Cardiac septum (tissue), 1 donor: ENCODE measurements at regions of chr4 and their contacts with region 1.

Region 1: DNA sequence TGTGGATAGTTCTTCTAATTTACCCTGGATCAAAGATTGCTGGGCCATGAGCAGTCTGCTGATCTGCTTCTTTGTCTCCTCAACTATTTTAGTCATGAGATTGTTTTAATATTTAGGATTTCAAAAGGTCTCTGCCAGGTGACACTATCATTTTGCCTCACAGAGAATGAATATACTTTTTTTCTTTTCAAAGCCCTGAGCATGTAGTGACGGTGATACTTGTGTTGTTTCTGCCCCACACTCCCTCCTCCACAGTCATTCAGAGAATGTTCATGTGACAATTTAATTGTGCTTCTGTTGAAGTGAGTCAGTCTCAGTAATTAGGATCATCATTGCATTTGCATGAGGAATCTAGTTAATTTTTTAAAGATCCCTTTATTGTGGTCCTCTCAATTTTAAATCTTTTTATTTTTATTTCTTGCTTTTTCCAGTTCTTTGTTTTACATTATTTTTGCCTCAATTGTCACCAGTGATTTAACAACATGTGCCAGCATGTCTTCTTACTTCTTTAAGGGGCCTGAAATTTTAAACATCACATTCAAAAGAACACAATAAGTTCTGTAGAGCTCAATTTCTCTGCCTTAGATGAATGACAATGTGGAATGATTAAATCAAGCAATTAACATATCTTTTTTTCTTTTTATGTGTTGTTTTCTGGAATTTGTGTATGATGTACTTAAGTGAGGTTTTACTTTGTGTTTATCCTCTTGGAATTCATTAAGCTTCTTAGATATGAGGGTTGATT is 12.3 kb downstream of the MMRN1 start:
- DNase-seq: no peak

Region 2: GRCh38 chr4:89226665-89227574 is 680.0 kb before region 1 on chr4:
- intact Hi-C with region 1: loop called (anchors 5 kb)
- DNase-seq: peak; percentile 85

Region 3: DNA sequence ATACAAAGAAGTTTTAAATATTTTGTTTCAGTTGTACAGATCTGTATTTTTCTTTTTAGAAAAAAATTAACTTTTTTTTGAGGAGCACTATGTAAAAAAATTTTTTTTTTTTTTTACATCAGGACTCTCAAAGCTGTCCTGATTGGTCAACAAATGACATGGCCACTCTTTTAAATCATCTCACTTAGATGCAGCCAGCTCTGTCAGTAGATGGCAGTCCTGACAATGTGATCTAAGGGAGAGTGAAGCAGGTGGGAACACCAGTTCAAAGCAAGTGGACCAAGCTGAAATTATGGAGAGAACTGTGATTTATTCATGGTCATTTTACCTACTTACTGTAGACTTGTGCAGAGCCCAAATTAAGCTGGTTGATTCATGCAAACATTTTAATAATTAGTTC is 424.7 kb before region 1 on chr4:
- intact Hi-C with region 1: loop called (anchors 5 kb)
- DNase-seq: no peak

Region 4: GRCh38 chr4:89586864-89587263 is 320.1 kb before region 1 on chr4:
- intact Hi-C with region 1: loop called (anchors 10 kb)
- DNase-seq: no peak

Region 5: GRCh38 chr4:89640620-89641366 is 266.2 kb before region 1 on chr4:
- intact Hi-C with region 1: loop called (anchors 5 kb)
- DNase-seq: no peak

Region 6: GRCh38 chr4:89724716-89725115 is 182.2 kb before region 1 on chr4:
- intact Hi-C with region 1: no loop called
- DNase-seq: no peak

Region 7: DNA sequence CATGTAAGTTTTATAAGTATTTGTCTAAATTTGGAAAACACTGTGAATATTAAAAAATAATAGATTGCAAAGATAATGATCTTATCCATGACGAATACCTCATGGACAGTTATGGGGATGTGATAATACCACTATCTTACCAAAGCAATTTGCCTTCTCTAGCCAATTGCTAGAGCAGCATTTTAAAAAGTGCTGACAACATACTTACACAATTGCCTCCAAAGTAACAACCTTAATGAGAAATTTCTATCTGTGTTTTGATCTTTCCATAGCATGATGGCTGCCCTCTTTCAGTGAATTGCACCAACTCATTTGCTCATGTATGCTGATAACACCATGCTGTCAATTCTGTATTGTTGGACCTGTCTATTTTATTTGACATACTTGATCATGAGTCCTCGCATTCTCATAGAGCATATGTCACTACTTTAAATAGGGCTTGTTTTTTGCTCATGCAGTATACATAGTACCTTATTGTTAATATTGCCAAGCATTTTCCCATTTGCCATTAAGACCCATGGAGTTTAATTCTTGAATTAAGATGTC is 74.9 kb after region 1 on chr4:
- intact Hi-C with region 1: no loop called
- DNase-seq: no peak

Region 8: GRCh38 chr4:90159185-90159584 is 252.2 kb after region 1 on chr4:
- intact Hi-C with region 1: no loop called
- DNase-seq: no peak